CD4-positive, alpha-beta T cell (primary cell): ENCODE measurements at regions of chr17 and their contacts with region 1.

Region 1: DNA sequence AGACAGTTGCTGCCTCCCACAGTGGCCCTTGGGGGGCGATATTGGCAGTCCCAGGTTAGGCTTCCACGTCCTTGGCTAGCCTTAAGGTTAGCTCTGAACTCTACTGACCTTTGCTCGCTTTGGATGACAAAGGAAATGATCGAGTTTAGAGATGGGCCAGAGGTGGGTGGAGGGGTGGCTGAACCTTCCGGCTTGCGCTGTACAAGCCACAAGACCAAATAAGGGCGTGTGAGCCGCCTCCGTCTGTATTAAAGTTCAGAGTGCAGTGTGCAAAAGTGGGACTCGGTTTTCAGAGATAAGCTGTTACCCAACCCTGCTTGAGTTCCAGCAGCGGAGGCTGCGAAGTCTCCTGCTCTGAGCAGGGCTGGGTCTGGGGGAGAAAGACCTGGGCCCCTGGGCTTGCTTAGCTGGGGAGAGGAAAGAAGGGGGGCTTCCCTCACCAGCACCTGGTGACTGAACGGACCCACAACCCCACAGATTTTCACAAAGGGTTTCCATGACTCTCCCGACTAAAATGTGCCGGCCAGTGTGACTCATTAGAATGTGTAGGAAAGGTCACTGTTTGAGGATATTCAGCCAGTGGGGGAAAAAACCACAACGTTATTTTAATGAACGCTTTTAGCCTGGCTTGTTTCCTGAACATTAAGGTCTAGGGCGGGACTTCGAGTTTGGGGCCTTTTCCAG is 67.2 kb downstream of the CENPV start:
- DNase-seq: peak; percentile 53 to 93 (median 68)
- ATAC-seq: peak; percentile 93
- H3K4me3 ChIP-seq: peak overlapping the region; percentile 11
- H3K4me3 Mint-ChIP-seq: peak overlapping the region; percentile 85
- H3K27ac ChIP-seq: peak overlapping the region; percentile 79 to 81
- H3K27ac Mint-ChIP-seq: peak overlapping the region; percentile 100
- H3K4me1 ChIP-seq: peaks cover 54% of the 10 kb centered on the region
- H3K4me1 Mint-ChIP-seq: peaks cover 62% of the 10 kb centered on the region
- H3K27me3 ChIP-seq: no peaks in the 10 kb centered on the region
- H3K27me3 Mint-ChIP-seq: no peaks in the 10 kb centered on the region
- CTCF ChIP-seq: peak; percentile 35

Region 2: DNA sequence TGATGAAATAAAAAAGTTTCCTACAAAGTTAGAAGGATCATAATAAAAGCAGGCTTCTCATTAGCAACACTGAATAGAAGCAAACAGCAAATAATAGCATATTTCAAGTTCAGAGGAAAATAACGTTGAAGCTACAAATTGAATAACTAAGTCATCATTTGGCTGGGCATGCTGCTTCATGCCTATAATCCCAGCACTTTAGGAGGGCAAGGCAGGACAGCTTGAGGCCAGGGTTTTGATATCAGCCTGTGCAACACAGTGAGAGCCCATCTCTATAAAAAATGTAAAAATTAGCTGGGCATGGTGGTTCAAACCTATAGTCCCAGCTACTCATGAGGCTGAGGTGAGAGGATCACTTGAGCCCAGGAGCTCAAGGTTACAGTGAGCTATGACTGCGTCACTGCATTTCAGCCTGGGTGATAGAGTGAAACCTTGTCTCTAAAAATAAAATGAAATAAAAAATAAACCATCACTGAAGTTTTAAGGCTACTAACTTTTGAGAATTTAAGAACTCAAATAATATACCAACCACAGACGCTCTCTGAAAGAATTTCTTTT is 96.2 kb before region 1 on chr17:
- CTCF ChIA-PET with region 1: no interaction called
- POLR2A ChIA-PET with region 1: no interaction called
- intact Hi-C with region 1: no loop called
- DNase-seq: no peak
- ATAC-seq: no peak
- H3K4me3 ChIP-seq: no peak overlapping the region
- H3K4me3 Mint-ChIP-seq: no peak overlapping the region
- H3K27ac ChIP-seq: no peak overlapping the region
- H3K27ac Mint-ChIP-seq: peak overlapping the region; percentile 13
- H3K4me1 ChIP-seq: no peaks in the 10 kb centered on the region
- H3K4me1 Mint-ChIP-seq: peaks cover 55% of the 10 kb centered on the region
- H3K27me3 ChIP-seq: no peaks in the 10 kb centered on the region
- H3K27me3 Mint-ChIP-seq: no peaks in the 10 kb centered on the region
- CTCF ChIP-seq: no peak

Region 3: GRCh38 chr17:16215273-16215964 is 70.7 kb before region 1 on chr17 and contains the start of gene NCOR1:
- CTCF ChIA-PET with region 1: interaction called, 5 read pairs
- POLR2A ChIA-PET with region 1: interaction called, 22 read pairs
- intact Hi-C with region 1: loop called (anchors 5 kb)
- DNase-seq: peak; percentile 79 to 95 (median 87)
- ATAC-seq: peak; percentile 87
- H3K4me3 ChIP-seq: peak within 1 kb of the TSS; percentile 73
- H3K4me3 Mint-ChIP-seq: peak within 1 kb of the TSS; percentile 100
- H3K27ac ChIP-seq: peak within 1 kb of the TSS; percentile 72 to 79
- H3K27ac Mint-ChIP-seq: peak within 1 kb of the TSS; percentile 99
- H3K4me1 ChIP-seq: peaks cover 36% of the 10 kb centered on the region
- H3K4me1 Mint-ChIP-seq: peaks cover 58% of the 10 kb centered on the region
- H3K27me3 ChIP-seq: no peaks in the 10 kb centered on the region
- H3K27me3 Mint-ChIP-seq: no peaks in the 10 kb centered on the region
- CTCF ChIP-seq: no peak
- total RNA-seq, gene NCOR1: 118 TPM

Region 4: GRCh38 chr17:16269658-16270057 is 16.4 kb before region 1 on chr17:
- CTCF ChIA-PET with region 1: interaction called, 3 read pairs
- POLR2A ChIA-PET with region 1: interaction called, 10 read pairs
- intact Hi-C with region 1: no loop called
- DNase-seq: no peak
- ATAC-seq: no peak
- H3K4me3 ChIP-seq: no peak overlapping the region
- H3K4me3 Mint-ChIP-seq: peak overlapping the region; percentile 60
- H3K27ac ChIP-seq: no peak overlapping the region
- H3K27ac Mint-ChIP-seq: peak overlapping the region; percentile 69
- H3K4me1 ChIP-seq: peaks cover 25% of the 10 kb centered on the region
- H3K4me1 Mint-ChIP-seq: peaks cover 28% of the 10 kb centered on the region
- H3K27me3 ChIP-seq: no peaks in the 10 kb centered on the region
- H3K27me3 Mint-ChIP-seq: no peaks in the 10 kb centered on the region
- CTCF ChIP-seq: no peak

Region 5: DNA sequence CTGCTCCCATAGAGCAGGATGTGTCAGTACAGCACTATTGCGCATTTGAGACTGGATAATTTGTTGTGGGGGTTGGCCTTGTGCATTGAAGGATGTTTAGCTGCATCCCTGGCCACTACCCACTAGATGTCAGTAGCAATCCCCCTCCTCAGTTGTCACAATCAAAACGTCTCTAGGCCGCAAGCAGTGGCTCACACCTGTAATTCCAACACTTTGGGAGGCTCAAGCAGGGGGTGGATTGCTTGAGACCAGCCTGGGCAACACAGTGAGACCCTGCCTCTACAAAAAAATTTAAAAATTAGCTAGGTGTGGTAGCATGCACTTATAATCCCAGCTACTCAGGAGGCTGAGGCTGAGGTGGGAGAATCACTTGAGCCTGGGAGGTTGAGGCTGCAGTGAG is 18.7 kb after region 1 on chr17:
- CTCF ChIA-PET with region 1: interaction called, 11 read pairs
- POLR2A ChIA-PET with region 1: interaction called, 3 read pairs
- intact Hi-C with region 1: no loop called
- DNase-seq: peak in 5 of 14 experiments; percentile 10 to 40 (median 16)
- ATAC-seq: peak; percentile 74
- H3K4me3 ChIP-seq: no peak overlapping the region
- H3K4me3 Mint-ChIP-seq: no peak overlapping the region
- H3K27ac ChIP-seq: no peak overlapping the region
- H3K27ac Mint-ChIP-seq: no peak overlapping the region
- H3K4me1 ChIP-seq: no peaks in the 10 kb centered on the region
- H3K4me1 Mint-ChIP-seq: peaks cover 5% of the 10 kb centered on the region
- H3K27me3 ChIP-seq: no peaks in the 10 kb centered on the region
- H3K27me3 Mint-ChIP-seq: no peaks in the 10 kb centered on the region
- CTCF ChIP-seq: peak; percentile 46